Mammary epithelial cell (primary cell): ENCODE measurements at regions of chr6 and their contacts with region 1.

Region 1: DNA sequence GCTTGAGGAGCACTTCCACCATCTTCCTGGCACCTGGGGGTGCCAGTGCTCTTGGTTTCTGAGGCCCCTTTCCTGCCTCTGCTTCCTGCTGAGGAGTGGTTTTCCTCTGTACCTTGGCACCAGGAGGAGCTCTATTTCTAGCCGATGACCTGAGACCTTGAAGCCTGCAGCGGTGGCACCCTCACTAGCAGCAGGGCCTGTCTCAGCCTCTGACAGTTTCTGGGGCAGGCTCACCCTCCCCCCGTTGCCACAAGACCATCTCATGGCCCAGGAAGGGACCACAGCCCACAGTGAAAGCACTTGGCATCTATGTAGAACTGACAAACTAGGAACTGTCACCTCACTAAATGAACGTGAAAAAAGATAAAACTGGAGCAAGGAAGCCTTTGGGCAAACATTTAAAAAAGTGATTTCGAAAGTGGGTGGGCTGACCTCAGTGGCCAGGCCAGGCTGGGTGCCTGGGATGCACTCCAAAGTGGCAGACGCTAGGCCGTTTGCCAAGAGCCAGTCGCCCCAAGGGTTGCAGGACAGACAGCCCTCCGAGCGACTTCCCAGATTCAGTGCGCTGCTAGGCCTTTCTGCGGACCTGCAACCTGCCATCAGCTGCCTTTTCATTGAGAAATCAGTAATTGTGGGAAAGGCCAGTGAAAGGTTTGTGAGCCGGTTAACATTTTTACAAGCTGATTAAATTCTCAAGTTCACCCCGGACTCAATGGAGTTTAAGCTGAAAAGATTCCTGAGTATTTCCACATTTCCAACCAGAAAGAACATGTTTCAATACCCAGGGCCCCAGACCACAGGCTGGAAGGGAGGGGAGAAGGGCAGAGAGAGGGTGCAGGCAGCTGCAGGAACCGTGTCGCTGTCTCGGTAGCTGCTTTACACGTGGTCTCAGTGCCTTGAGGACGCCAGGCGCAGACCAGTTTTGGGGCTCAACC is 303.7 kb downstream of the ESR1 start:
- DNase-seq: peak; percentile 26
- H3K4me3 ChIP-seq: no peak overlapping the region
- H3K27ac ChIP-seq: no peak overlapping the region
- H3K4me1 ChIP-seq: peaks cover 17% of the 10 kb centered on the region
- H3K27me3 ChIP-seq: no peaks in the 10 kb centered on the region
- CTCF ChIP-seq: no peak

Region 2: DNA sequence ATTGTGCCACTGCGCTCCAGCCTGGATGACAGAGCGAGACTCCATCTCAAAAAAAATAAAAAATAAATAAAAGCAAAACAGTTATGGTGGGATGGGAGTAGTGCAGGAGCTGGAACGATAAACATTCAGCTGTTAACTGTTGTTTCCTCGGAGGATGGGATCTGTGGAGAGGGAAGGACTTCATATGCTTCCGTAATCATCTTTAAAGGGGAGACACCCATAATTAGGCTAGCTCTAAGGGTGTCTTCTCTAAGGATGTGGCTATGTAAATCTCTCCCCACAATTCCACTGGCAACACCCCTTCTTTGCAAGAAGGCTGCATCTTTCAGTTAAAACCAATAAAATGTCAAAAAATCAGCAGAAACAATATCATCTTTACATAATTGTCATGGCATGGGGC is 1288.2 kb before region 1 on chr6:
- CTCF ChIA-PET with region 1: no interaction called
- dilution Hi-C with region 1: no loop called
- in situ Hi-C with region 1: no loop called
- intact Hi-C with region 1: no loop called
- DNase-seq: no peak
- H3K4me3 ChIP-seq: no peak overlapping the region
- H3K27ac ChIP-seq: no peak overlapping the region
- H3K4me1 ChIP-seq: no peaks in the 10 kb centered on the region
- H3K27me3 ChIP-seq: no peaks in the 10 kb centered on the region
- CTCF ChIP-seq: no peak

Region 3: DNA sequence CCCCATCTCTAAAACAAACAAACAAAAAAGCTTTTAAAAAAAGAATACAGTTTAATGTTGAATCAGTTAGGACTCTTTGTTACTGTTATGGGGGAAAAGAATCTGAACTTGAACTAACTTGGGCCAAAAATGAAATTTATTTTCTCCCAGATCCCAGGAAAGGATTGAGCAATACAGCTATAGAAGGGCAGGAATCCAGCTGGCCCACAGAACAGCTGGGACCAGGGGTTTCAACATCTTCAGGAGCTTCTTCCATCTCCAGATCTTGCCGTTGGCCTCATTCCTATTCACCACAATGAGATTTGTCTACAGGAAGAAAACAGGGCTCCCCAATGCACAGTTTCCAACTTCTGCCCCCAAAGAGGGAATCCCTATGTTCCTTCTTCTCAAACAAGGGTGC is 914.6 kb before region 1 on chr6:
- CTCF ChIA-PET with region 1: no interaction called
- dilution Hi-C with region 1: no loop called
- in situ Hi-C with region 1: no loop called
- intact Hi-C with region 1: no loop called
- DNase-seq: no peak
- H3K4me3 ChIP-seq: no peak overlapping the region
- H3K27ac ChIP-seq: no peak overlapping the region
- H3K4me1 ChIP-seq: no peaks in the 10 kb centered on the region
- H3K27me3 ChIP-seq: no peaks in the 10 kb centered on the region
- CTCF ChIP-seq: no peak

Region 4: DNA sequence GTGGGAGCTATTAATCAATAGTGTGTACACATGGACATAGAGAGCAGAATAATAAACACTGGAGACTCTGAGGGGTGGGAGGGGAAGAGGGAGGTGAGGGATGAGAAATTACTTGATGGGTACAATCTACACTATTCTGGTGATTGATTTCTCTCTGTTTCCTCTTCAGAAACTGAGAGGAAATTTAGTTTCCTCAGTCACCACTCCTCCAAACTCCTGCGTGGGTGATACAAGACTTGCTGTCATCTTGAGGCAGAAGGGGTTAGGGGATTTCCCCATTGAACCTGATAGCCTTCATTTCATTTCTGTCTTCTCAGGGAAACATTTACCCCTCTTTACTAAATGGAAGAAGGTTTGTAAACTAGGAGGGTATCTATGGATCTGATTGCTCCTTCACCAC is 388.0 kb before region 1 on chr6:
- CTCF ChIA-PET with region 1: no interaction called
- dilution Hi-C with region 1: no loop called
- in situ Hi-C with region 1: no loop called
- intact Hi-C with region 1: no loop called
- DNase-seq: no peak
- H3K4me3 ChIP-seq: no peak overlapping the region
- H3K27ac ChIP-seq: no peak overlapping the region
- H3K4me1 ChIP-seq: no peaks in the 10 kb centered on the region
- H3K27me3 ChIP-seq: peaks cover 3% of the 10 kb centered on the region
- CTCF ChIP-seq: no peak

Region 5: GRCh38 chr6:152277826-152278329 is 166.7 kb after region 1 on chr6:
- CTCF ChIA-PET with region 1: interaction called, 41 read pairs
- dilution Hi-C with region 1: no loop called
- in situ Hi-C with region 1: no loop called
- intact Hi-C with region 1: no loop called
- DNase-seq: no peak
- H3K4me3 ChIP-seq: no peak overlapping the region
- H3K27ac ChIP-seq: no peak overlapping the region
- H3K4me1 ChIP-seq: peaks cover 10% of the 10 kb centered on the region
- H3K27me3 ChIP-seq: no peaks in the 10 kb centered on the region
- CTCF ChIP-seq: no peak